Psoas muscle (tissue), 8 donors: ENCODE measurements at regions of chr12 and their contacts with region 1.

Region 1: GRCh38 chr12:123293178-123293760 is 21.6 kb upstream of the CDK2AP1 start:
- DNase-seq: no peak
- ATAC-seq: no peak
- H3K4me3 ChIP-seq: no peak overlapping the region
- H3K27ac ChIP-seq: no peak overlapping the region
- H3K4me1 ChIP-seq: no peaks in the 10 kb centered on the region
- H3K27me3 ChIP-seq: no peaks in the 10 kb centered on the region
- CTCF ChIP-seq: no peak

Region 2: GRCh38 chr12:122909442-122910288 is 383.6 kb before region 1 on chr12:
- intact Hi-C with region 1: no loop called
- DNase-seq: no peak
- ATAC-seq: peak; percentile 78 to 90 (median 88)
- H3K4me3 ChIP-seq: no peak overlapping the region
- H3K27ac ChIP-seq: peak overlapping the region; percentile 42
- H3K4me1 ChIP-seq: peaks cover 19% of the 10 kb centered on the region
- H3K27me3 ChIP-seq: no peaks in the 10 kb centered on the region
- CTCF ChIP-seq: no peak

Region 3: GRCh38 chr12:123337070-123337469 is 43.8 kb after region 1 on chr12:
- intact Hi-C with region 1: no loop called
- DNase-seq: no peak
- ATAC-seq: no peak
- H3K4me3 ChIP-seq: no peak overlapping the region
- H3K27ac ChIP-seq: no peak overlapping the region
- H3K4me1 ChIP-seq: no peaks in the 10 kb centered on the region
- H3K27me3 ChIP-seq: no peaks in the 10 kb centered on the region
- CTCF ChIP-seq: no peak

Region 4: GRCh38 chr12:123356159-123356670 is 62.9 kb after region 1 on chr12:
- intact Hi-C with region 1: loop called in 1 of 2 experiments (anchors 5 kb)
- DNase-seq: no peak
- ATAC-seq: no peak
- H3K4me3 ChIP-seq: no peak overlapping the region
- H3K27ac ChIP-seq: no peak overlapping the region
- H3K4me1 ChIP-seq: peaks cover 8% of the 10 kb centered on the region
- H3K27me3 ChIP-seq: no peaks in the 10 kb centered on the region
- CTCF ChIP-seq: no peak

Region 5: DNA sequence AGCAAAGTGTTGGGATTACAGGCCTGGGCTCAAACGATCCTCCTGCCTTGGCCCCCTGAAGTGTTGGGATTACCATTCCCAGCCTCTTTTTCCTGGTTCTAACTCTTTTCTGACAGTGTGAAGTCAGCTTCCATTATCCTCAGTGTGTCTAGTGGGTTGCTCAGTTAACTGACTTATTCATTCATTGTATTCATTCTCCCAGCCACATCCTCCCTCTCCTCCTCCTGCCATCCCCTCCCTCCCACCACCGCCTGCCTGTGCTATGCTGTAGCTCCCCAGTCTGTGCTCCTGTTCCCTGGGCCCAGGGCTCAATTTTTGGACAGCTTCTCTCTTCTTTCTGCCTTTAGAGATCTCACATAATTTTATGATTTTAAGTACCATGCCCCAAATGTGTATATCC is 438.3 kb after region 1 on chr12:
- intact Hi-C with region 1: loop called in 1 of 2 experiments (anchors 10 kb)
- DNase-seq: no peak
- ATAC-seq: no peak
- H3K4me3 ChIP-seq: no peak overlapping the region
- H3K27ac ChIP-seq: no peak overlapping the region
- H3K4me1 ChIP-seq: no peaks in the 10 kb centered on the region
- H3K27me3 ChIP-seq: no peaks in the 10 kb centered on the region
- CTCF ChIP-seq: no peak